Aorta (tissue), 5 donors: ENCODE measurements at regions of chr5 and their contacts with region 1.

Region 1: DNA sequence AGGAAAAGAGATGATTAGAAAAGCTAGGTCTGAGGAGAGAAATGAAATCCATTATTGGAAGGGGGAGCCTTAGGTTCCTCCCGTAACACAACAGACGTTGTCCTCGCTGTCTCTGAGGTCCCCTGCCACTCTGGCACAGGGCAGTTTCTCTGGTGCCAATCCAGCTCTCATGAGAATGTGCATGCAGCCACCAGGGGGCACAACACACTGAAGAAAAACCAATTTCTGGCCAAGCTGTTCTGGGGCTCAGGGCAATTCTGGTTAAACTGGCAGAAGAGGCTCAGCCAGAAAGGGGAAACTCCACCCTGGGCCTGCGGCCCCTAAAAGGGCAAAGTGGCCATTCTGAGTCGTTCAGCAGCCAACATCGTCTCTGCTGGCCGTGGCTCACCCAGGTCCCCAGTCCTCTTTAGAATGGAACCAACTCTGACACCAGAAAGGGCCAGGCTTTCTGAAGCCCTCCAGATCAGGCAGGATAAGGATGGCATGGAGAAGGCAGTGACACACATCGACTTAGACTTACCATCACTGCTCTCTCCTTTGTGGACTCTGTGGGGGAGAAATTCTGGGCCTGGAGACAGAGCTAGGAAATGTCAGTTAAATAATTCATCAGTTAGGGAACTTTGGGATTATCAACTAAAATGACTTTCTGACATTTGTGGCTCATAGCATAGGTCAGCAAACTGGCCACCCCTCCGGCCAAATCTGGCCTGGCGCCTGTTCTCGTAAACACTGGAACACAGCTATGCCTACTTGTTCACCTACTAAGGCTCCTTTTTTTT is 58.5 kb upstream of the GOLPH3 start:
- DNase-seq: peak; percentile 87 to 91
- ATAC-seq: peak; percentile 91
- H3K4me3 ChIP-seq: no peak overlapping the region
- H3K27ac ChIP-seq: peak overlapping the region in 1 of 2 donors; percentile 76
- H3K4me1 ChIP-seq: peaks cover 2 to 8% of the 10 kb centered on the region in 2 donors
- H3K27me3 ChIP-seq: no peaks in the 10 kb centered on the region

Region 2: GRCh38 chr5:32059768-32060530 is 172.7 kb before region 1 on chr5:
- intact Hi-C with region 1: no loop called
- DNase-seq: no peak
- ATAC-seq: no peak
- H3K4me3 ChIP-seq: no peak overlapping the region
- H3K27ac ChIP-seq: no peak overlapping the region
- H3K4me1 ChIP-seq: peaks cover 0 to 2% of the 10 kb centered on the region in 2 donors
- H3K27me3 ChIP-seq: no peaks in the 10 kb centered on the region

Region 3: DNA sequence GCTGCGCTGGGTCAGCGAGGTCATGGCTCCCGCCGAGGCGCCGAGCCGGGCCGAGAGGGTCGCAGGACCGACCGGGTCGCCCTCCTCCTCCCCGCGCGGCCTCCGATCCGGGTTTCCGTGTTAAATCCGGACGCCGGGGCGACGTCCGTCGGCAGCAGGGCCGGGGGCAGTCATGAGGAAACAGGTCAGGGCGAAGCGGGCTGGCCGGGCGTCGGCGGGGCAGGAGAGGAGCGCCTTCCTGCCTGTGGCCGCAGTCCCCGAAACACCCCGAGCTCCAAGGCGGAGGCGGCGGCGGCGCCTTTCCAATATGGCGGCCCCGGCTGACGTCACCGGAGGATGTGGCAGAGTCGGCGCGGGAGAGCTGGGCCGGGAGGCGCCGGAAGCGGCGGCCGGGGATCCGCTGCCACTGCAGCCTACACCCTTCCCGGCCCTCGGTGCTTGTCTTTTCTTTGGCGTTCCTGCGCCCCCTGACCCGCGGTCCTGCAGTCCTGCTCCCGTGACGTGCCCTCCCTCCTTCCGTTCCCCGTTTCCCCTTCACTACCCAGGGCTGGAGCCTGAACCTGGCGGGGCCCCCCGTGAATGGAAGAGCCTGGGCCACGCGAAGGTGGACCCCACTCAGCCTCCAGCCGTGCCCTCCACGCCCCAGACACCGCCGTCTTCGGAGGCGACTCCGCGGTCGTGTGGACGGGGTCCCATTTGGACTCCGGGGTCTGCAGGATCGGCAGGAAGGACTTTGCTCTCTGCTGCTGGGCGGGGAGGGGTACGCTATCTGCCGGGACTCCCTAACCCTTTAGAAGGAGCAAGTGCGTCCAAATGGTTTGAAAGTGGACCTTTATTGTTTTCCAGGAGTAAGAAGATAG is 58.4 kb before region 1 on chr5 and contains the start of gene GOLPH3:
- intact Hi-C with region 1: loop called in 1 of 2 experiments (anchors 5 kb)
- DNase-seq: peak; percentile 96 to 98
- ATAC-seq: peak; percentile 96
- H3K4me3 ChIP-seq: peak within 1 kb of the TSS; percentile 62 to 91
- H3K27ac ChIP-seq: peak within 1 kb of the TSS; percentile 78 to 98
- H3K4me1 ChIP-seq: no peaks in the 10 kb centered on the region
- H3K27me3 ChIP-seq: no peaks in the 10 kb centered on the region
- total RNA-seq, gene GOLPH3: 84.9 to 92.0 TPM

Region 4: GRCh38 chr5:32206509-32207354 is 25.9 kb before region 1 on chr5:
- intact Hi-C with region 1: no loop called
- DNase-seq: no peak
- ATAC-seq: no peak
- H3K4me3 ChIP-seq: no peak overlapping the region
- H3K27ac ChIP-seq: no peak overlapping the region
- H3K4me1 ChIP-seq: peaks cover 0 to 6% of the 10 kb centered on the region in 2 donors
- H3K27me3 ChIP-seq: no peaks in the 10 kb centered on the region

Region 5: DNA sequence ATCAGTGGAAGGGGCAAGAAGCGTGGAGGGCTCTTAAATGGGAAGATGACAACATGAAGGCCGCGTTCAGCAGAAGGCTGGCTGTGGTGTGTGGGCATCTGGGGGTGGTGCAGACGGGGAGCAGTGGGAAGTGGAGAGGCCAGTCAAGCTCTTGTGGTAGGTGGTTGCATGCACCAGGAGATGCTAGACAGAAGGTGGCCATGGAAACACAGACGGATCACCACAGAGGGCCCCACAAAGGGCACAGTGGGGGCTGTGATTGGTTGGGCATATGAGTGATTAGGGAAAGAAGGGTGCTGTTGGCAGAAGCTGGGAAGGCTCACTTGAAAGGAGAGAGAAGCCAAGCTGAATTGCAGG is 65.4 kb after region 1 on chr5:
- intact Hi-C with region 1: no loop called
- DNase-seq: no peak
- ATAC-seq: no peak
- H3K4me3 ChIP-seq: no peak overlapping the region
- H3K27ac ChIP-seq: no peak overlapping the region
- H3K4me1 ChIP-seq: no peaks in the 10 kb centered on the region
- H3K27me3 ChIP-seq: no peaks in the 10 kb centered on the region

Region 6: DNA sequence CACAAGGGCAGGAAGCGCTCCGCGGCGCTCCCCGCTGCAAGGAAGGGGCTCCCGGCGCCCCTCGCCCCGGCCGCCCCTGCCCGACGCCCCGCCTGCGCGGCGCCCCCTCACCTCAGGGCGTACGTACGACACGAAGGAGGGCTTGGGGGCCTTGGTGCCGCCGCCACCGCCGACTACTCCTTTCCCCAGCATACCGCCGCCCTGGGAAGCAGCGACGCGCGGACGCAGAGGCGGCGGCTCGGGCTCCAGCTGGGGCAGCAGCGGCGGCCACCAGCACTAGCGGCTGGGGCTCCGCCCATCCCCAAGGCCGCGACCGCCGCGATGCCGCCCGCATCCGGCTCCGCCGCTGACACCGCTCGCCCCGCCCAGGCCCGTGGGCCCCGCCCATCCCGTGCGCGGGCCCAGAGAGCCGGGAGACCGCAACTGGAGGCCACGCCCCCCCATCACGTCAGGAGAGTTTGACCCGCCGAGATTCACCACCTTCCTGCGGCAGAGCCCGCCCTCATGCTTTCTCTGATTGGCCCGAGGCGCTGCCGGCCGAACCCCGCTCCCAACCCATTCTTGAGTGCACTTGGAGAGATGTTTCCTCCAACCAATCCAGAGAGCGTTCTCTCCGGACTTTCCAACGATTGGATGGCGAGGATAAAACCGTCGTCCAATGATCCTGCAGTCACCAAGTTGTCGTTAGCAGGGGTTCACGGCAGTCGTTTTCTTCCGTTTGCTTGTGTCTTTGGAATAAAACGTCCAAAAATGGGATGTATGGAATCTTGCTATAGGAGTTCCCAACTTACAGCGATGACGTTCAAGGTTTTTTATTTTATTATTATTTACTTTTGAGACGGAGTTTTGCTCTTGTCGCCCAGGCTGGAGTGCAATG is 80.3 kb after region 1 on chr5 and contains the start of gene MTMR12:
- intact Hi-C with region 1: loop called (anchors 5 kb)
- DNase-seq: peak; percentile 100
- ATAC-seq: peak; percentile 100
- H3K4me3 ChIP-seq: peak within 1 kb of the TSS; percentile 81 to 97
- H3K27ac ChIP-seq: peak within 1 kb of the TSS; percentile 92 to 97
- H3K4me1 ChIP-seq: no peaks in the 10 kb centered on the region
- H3K27me3 ChIP-seq: no peaks in the 10 kb centered on the region
- total RNA-seq, gene MTMR12: 36.9 to 37.8 TPM

Region 7: DNA sequence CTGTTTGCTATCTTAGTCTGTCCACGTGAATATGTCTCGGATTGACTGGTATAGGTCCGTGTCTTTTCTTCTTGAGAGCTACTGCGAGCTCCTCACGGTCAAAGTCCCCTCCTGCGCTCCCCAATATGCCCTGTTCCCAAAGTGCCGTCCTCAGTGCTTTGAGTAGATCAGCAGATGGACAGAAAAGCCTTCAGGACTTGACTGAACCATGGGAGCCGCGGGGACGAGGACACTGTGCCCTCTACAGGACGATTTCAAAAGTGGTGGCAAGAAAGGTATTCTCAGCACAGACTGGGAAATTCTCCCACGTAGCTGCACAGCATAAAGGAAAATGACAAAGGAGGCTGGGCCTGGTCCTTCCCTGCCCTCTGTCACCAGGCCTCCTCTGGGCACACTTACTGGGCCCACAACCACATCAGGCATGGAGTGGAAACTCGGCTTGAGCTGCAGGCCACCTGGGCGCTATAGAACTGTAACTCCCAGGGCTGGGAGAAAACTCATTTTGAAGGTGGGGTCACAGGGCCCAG is 96.7 kb after region 1 on chr5:
- intact Hi-C with region 1: loop called (anchors 2 to 5 kb)
- DNase-seq: peak in 1 of 2 donors; percentile 63
- ATAC-seq: peak; percentile 87
- H3K4me3 ChIP-seq: no peak overlapping the region
- H3K27ac ChIP-seq: no peak overlapping the region
- H3K4me1 ChIP-seq: no peaks in the 10 kb centered on the region
- H3K27me3 ChIP-seq: no peaks in the 10 kb centered on the region

Region 8: GRCh38 chr5:32600057-32600622 is 367.5 kb after region 1 on chr5:
- intact Hi-C with region 1: loop called in 1 of 2 experiments (anchors 10 kb)
- DNase-seq: no peak
- ATAC-seq: peak; percentile 84
- H3K4me3 ChIP-seq: no peak overlapping the region
- H3K27ac ChIP-seq: peak overlapping the region in 1 of 2 donors; percentile 5
- H3K4me1 ChIP-seq: peaks cover 0 to 1% of the 10 kb centered on the region in 2 donors
- H3K27me3 ChIP-seq: no peaks in the 10 kb centered on the region